ENCODE measurements at regions of chr14 and their contacts with region 1.

Region 1: GRCh38 chr14:20989572-20990551 is at the start of gene METTL17:
- DNase-seq: peak; percentile 91 to 95
- H3K4me3 ChIP-seq: peak within 1 kb of the TSS; percentile 65
- H3K4me3 Mint-ChIP-seq: peak within 1 kb of the TSS; percentile 71
- H3K27ac Mint-ChIP-seq: peak within 1 kb of the TSS; percentile 33
- H3K4me1 ChIP-seq: peaks cover 19% of the 10 kb centered on the region
- H3K4me1 Mint-ChIP-seq: peaks cover 6% of the 10 kb centered on the region
- H3K27me3 ChIP-seq: no peaks in the 10 kb centered on the region
- H3K27me3 Mint-ChIP-seq: no peaks in the 10 kb centered on the region
- CTCF ChIP-seq: peak in 1 of 2 experiments; percentile 52
- total RNA-seq, gene METTL17: 78.8 and 80.5 TPM in 2 replicates

Region 2: GRCh38 chr14:20976291-20976690 is 13.6 kb before region 1 on chr14:
- CTCF ChIA-PET with region 1: interaction called, 4 read pairs
- POLR2A ChIA-PET with region 1: interaction called, 4 read pairs
- intact Hi-C with region 1: loop called (anchors 1 kb)
- DNase-seq: no peak
- H3K4me3 ChIP-seq: no peak overlapping the region
- H3K4me3 Mint-ChIP-seq: no peak overlapping the region
- H3K27ac Mint-ChIP-seq: no peak overlapping the region
- H3K4me1 ChIP-seq: peaks cover 43% of the 10 kb centered on the region
- H3K4me1 Mint-ChIP-seq: peaks cover 36% of the 10 kb centered on the region
- H3K27me3 ChIP-seq: no peaks in the 10 kb centered on the region
- H3K27me3 Mint-ChIP-seq: no peaks in the 10 kb centered on the region
- CTCF ChIP-seq: no peak

Measured in Caco-2 (cell line).